ENCODE measurements at regions of chr7 and their contacts with region 1.

Region 1: GRCh38 chr7:45136106-45137060 is 21.2 kb upstream of the RAMP3 start:
- DNase-seq: peak; percentile 86
- H3K27ac ChIP-seq: no peak overlapping the region
- CTCF ChIP-seq: peak; percentile 90

Region 2: DNA sequence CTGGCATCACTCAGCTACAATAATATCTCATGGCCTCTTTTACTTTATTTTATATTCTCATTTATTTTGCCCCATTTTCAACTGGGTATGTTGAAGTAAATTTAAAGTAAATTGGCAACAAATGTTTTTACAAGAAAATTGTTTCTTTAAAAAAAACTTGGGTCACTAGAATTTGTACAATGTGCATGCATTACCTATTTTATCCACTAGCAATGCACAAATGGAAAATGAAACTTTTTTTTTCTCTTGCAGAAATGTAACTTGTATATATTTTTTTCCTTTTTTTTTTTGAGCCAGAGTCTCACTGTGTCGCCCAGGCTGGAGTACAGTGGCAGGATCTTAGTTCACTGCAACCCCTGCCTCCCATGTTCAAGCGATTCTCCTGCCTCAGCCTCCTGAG is 278.2 kb before region 1 on chr7:
- CTCF ChIA-PET with region 1: interaction called, 43 read pairs
- POLR2A ChIA-PET with region 1: no interaction called
- DNase-seq: no peak
- H3K27ac ChIP-seq: no peak overlapping the region
- CTCF ChIP-seq: peak; percentile 37

Region 3: DNA sequence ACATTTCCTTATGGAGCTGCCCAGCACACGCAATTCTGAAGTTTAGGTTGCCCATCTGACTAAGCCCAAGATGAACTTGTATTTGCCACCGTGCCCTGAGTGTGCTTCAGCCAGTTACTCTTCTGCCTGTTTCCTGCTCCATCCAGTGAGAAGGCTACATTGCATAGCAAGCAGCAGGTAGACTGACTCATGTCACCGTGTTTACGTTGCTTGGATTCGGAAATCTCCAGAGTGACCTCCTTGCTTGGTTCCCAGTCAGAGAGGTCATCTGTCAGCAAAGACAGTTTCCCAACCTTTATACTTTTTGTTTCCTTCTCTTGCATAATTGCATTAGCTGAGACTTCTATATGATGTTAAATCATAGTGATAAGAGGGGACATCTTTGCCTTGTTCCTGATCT is 78.5 kb before region 1 on chr7:
- CTCF ChIA-PET with region 1: no interaction called
- POLR2A ChIA-PET with region 1: no interaction called
- DNase-seq: no peak
- H3K27ac ChIP-seq: no peak overlapping the region
- CTCF ChIP-seq: no peak

Region 4: GRCh38 chr7:45125193-45125904 is 11.0 kb before region 1 on chr7:
- CTCF ChIA-PET with region 1: interaction called, 12 read pairs
- POLR2A ChIA-PET with region 1: no interaction called
- DNase-seq: no peak
- H3K27ac ChIP-seq: no peak overlapping the region
- CTCF ChIP-seq: no peak